ENCODE measurements at regions of chr1 and their contacts with region 1.

Region 1: GRCh38 chr1:52056163-52056936 is at the start of gene BTF3L4:
- DNase-seq: peak; percentile 85 to 95 (median 90)
- ATAC-seq: peak; percentile 96
- H3K4me3 ChIP-seq: peak within 1 kb of the TSS; percentile 88
- H3K4me3 Mint-ChIP-seq: peak within 1 kb of the TSS; percentile 97
- H3K27ac ChIP-seq: peak within 1 kb of the TSS; percentile 83 to 84
- H3K27ac Mint-ChIP-seq: peak within 1 kb of the TSS; percentile 92
- H3K4me1 ChIP-seq: peaks cover 26% of the 10 kb centered on the region
- H3K4me1 Mint-ChIP-seq: peaks cover 71% of the 10 kb centered on the region
- H3K27me3 ChIP-seq: no peaks in the 10 kb centered on the region
- H3K27me3 Mint-ChIP-seq: no peaks in the 10 kb centered on the region
- CTCF ChIP-seq: no peak
- total RNA-seq, gene BTF3L4: 29.4 to 34.1 TPM

Region 2: DNA sequence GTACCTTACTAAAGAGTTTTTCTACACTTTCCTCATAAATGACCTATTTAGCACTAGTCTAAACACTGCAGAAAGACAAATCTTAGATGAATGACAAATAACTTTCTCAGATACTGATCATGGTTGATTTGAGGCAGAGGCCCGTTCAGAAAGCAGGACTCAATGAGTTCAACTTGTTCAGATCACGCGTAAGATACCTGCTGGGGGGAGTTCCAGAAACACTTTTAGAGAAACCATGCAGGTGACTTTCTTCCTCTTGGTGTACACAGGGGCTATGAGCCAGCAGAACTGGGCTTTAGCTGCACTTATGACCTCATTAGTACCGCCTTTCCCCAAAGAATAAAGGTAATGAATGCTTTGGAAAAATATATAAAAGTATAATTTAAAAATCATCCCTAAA is 687.2 kb before region 1 on chr1:
- CTCF ChIA-PET with region 1: no interaction called
- POLR2A ChIA-PET with region 1: no interaction called
- intact Hi-C with region 1: no loop called
- DNase-seq: no peak
- ATAC-seq: no peak
- H3K4me3 ChIP-seq: no peak overlapping the region
- H3K4me3 Mint-ChIP-seq: no peak overlapping the region
- H3K27ac ChIP-seq: no peak overlapping the region
- H3K27ac Mint-ChIP-seq: no peak overlapping the region
- H3K4me1 ChIP-seq: no peaks in the 10 kb centered on the region
- H3K4me1 Mint-ChIP-seq: no peaks in the 10 kb centered on the region
- H3K27me3 ChIP-seq: no peaks in the 10 kb centered on the region
- H3K27me3 Mint-ChIP-seq: no peaks in the 10 kb centered on the region
- CTCF ChIP-seq: no peak

Region 3: GRCh38 chr1:52033190-52034049 is 22.9 kb before region 1 on chr1 and contains the start of gene KTI12:
- CTCF ChIA-PET with region 1: interaction called, 5 read pairs
- POLR2A ChIA-PET with region 1: interaction called, 63 read pairs
- intact Hi-C with region 1: loop called in 1 of 2 experiments (anchors 1 kb)
- DNase-seq: peak; percentile 78 to 96 (median 86)
- ATAC-seq: peak; percentile 94
- H3K4me3 ChIP-seq: peak within 1 kb of the TSS; percentile 85
- H3K4me3 Mint-ChIP-seq: peak within 1 kb of the TSS; percentile 91
- H3K27ac ChIP-seq: peak within 1 kb of the TSS; percentile 81 to 91
- H3K27ac Mint-ChIP-seq: peak within 1 kb of the TSS; percentile 97
- H3K4me1 ChIP-seq: peaks cover 23% of the 10 kb centered on the region
- H3K4me1 Mint-ChIP-seq: peaks cover 40% of the 10 kb centered on the region
- H3K27me3 ChIP-seq: no peaks in the 10 kb centered on the region
- H3K27me3 Mint-ChIP-seq: no peaks in the 10 kb centered on the region
- CTCF ChIP-seq: no peak
- total RNA-seq, gene KTI12: 23.4 to 24.0 TPM

Region 4: GRCh38 chr1:52365746-52366516 is 309.6 kb after region 1 on chr1 and contains the start of gene CC2D1B:
- CTCF ChIA-PET with region 1: no interaction called
- POLR2A ChIA-PET with region 1: interaction called, 5 read pairs
- intact Hi-C with region 1: loop called in 1 of 2 experiments (anchors 5 kb)
- DNase-seq: peak; percentile 97 to 100 (median 99)
- ATAC-seq: peak; percentile 79
- H3K4me3 ChIP-seq: peak within 1 kb of the TSS; percentile 76
- H3K4me3 Mint-ChIP-seq: peak within 1 kb of the TSS; percentile 94
- H3K27ac ChIP-seq: peak within 1 kb of the TSS; percentile 77 to 89
- H3K27ac Mint-ChIP-seq: peak within 1 kb of the TSS; percentile 96
- H3K4me1 ChIP-seq: peaks cover 50% of the 10 kb centered on the region
- H3K4me1 Mint-ChIP-seq: peaks cover 60% of the 10 kb centered on the region
- H3K27me3 ChIP-seq: no peaks in the 10 kb centered on the region
- H3K27me3 Mint-ChIP-seq: no peaks in the 10 kb centered on the region
- CTCF ChIP-seq: no peak
- total RNA-seq, gene CC2D1B: 46.5 to 47.5 TPM

Region 5: DNA sequence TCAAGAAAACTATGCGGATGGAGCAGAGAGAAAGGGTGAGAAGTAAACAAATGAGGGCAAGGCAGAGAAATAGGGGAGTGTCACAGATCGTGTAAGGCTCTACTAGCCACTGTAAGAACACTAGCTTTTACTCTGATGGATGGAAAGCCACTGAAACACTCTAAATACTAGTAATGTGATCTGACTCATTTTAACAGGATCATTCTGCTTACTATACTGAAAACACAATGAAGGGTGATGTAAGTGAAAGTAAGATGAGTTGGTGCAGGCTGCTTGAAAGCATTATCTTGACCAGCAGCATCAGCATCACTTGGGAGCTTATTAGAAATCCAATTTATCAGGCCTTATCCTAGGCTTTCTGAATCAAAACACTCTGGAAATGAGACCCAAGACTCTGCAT is 463.8 kb after region 1 on chr1:
- CTCF ChIA-PET with region 1: no interaction called
- POLR2A ChIA-PET with region 1: no interaction called
- intact Hi-C with region 1: no loop called
- DNase-seq: no peak
- ATAC-seq: no peak
- H3K4me3 ChIP-seq: no peak overlapping the region
- H3K4me3 Mint-ChIP-seq: no peak overlapping the region
- H3K27ac ChIP-seq: no peak overlapping the region
- H3K27ac Mint-ChIP-seq: no peak overlapping the region
- H3K4me1 ChIP-seq: peaks cover 9% of the 10 kb centered on the region
- H3K4me1 Mint-ChIP-seq: peaks cover 50% of the 10 kb centered on the region
- H3K27me3 ChIP-seq: no peaks in the 10 kb centered on the region
- H3K27me3 Mint-ChIP-seq: no peaks in the 10 kb centered on the region
- CTCF ChIP-seq: no peak

Region 6: GRCh38 chr1:52726265-52727113 is 670.1 kb after region 1 on chr1 and contains the start of gene ZYG11B:
- CTCF ChIA-PET with region 1: no interaction called
- POLR2A ChIA-PET with region 1: no interaction called
- intact Hi-C with region 1: loop called in 1 of 2 experiments (anchors 10 kb)
- DNase-seq: peak; percentile 85 to 96 (median 92)
- ATAC-seq: peak; percentile 91
- H3K4me3 ChIP-seq: peak within 1 kb of the TSS; percentile 79
- H3K4me3 Mint-ChIP-seq: peak within 1 kb of the TSS; percentile 95
- H3K27ac ChIP-seq: peak within 1 kb of the TSS in 1 of 2 donors; percentile 45
- H3K27ac Mint-ChIP-seq: peak within 1 kb of the TSS; percentile 77
- H3K4me1 ChIP-seq: peaks cover 36% of the 10 kb centered on the region
- H3K4me1 Mint-ChIP-seq: peaks cover 54% of the 10 kb centered on the region
- H3K27me3 ChIP-seq: no peaks in the 10 kb centered on the region
- H3K27me3 Mint-ChIP-seq: no peaks in the 10 kb centered on the region
- CTCF ChIP-seq: no peak
- total RNA-seq, gene ZYG11B: 14.1 to 16.1 TPM

Region 7: GRCh38 chr1:53196485-53197270 is 1140.3 kb after region 1 on chr1 and contains the start of gene CPT2:
- CTCF ChIA-PET with region 1: no interaction called
- POLR2A ChIA-PET with region 1: no interaction called
- intact Hi-C with region 1: loop called in 1 of 2 experiments (anchors 10 kb)
- DNase-seq: peak; percentile 75 to 96 (median 89)
- ATAC-seq: peak; percentile 92
- H3K4me3 ChIP-seq: peak within 1 kb of the TSS; percentile 92
- H3K4me3 Mint-ChIP-seq: peak within 1 kb of the TSS; percentile 93
- H3K27ac ChIP-seq: peak within 1 kb of the TSS; percentile 93 to 97
- H3K27ac Mint-ChIP-seq: peak within 1 kb of the TSS; percentile 93
- H3K4me1 ChIP-seq: peaks cover 25% of the 10 kb centered on the region
- H3K4me1 Mint-ChIP-seq: peaks cover 29% of the 10 kb centered on the region
- H3K27me3 ChIP-seq: no peaks in the 10 kb centered on the region
- H3K27me3 Mint-ChIP-seq: no peaks in the 10 kb centered on the region
- CTCF ChIP-seq: no peak
- total RNA-seq, gene CPT2: 10.6 to 12.0 TPM

Measured in CD4-positive, alpha-beta T cell (primary cell).